ENCODE measurements at regions of chr14 and their contacts with region 1.

Region 1: DNA sequence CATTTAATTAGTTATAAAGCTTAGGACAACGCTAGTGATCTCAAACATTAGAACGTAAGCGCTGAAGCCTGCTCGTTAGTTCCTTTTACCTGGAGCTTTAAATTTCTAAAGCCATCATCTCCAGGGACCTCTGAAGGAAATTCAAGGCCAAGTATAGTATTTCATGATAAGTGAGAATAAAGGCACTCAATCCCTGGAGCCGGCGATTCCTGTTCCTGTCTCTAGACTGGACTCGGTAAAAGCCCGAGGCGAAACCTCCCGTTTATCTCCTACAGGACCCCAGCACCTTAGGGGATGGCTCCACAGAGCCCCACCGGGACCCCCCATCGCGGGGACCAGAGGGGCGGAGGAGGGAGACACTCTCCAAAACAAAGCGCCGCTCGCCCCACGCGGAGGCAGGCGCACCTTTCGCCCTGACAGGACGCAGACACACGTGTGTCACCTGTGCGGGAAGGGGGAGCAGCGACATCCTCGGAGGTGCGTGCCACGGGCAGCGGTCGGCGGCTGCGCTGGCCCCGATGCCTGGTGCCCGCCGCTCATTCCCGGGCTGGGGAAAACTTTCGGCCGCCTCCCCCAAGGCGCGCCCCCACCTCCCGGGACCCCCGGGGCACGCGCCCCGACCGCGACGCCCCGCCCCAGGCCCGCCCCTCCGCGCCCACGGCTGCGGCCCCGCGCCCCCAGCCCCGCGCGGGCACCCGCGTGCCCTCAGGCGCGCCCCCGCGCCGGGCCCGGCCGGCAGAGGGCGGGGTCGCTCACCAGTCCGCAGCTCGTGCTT is 678 bp downstream of the RPS6KA5 start:
- DNase-seq: peak; percentile 61
- H3K4me3 ChIP-seq: peak overlapping the region; percentile 79
- H3K27ac ChIP-seq: peak overlapping the region; percentile 96
- H3K4me1 ChIP-seq: no peaks in the 10 kb centered on the region
- H3K27me3 ChIP-seq: no peaks in the 10 kb centered on the region
- CTCF ChIP-seq: no peak

Region 2: GRCh38 chr14:90903101-90903500 is 156.7 kb before region 1 on chr14:
- intact Hi-C with region 1: loop called (anchors 5 kb)
- DNase-seq: peak; percentile 74
- H3K4me3 ChIP-seq: no peak overlapping the region
- H3K27ac ChIP-seq: no peak overlapping the region
- H3K4me1 ChIP-seq: no peaks in the 10 kb centered on the region
- H3K27me3 ChIP-seq: no peaks in the 10 kb centered on the region
- CTCF ChIP-seq: peak; percentile 60

Region 3: GRCh38 chr14:91140672-91141071 is 80.9 kb after region 1 on chr14:
- intact Hi-C with region 1: loop called (anchors 10 kb)
- DNase-seq: peak; percentile 50
- H3K4me3 ChIP-seq: no peak overlapping the region
- H3K27ac ChIP-seq: no peak overlapping the region
- H3K4me1 ChIP-seq: peaks cover 4% of the 10 kb centered on the region
- H3K27me3 ChIP-seq: no peaks in the 10 kb centered on the region
- CTCF ChIP-seq: peak; percentile 28

Region 4: GRCh38 chr14:91164685-91165084 is 104.9 kb after region 1 on chr14:
- intact Hi-C with region 1: no loop called
- DNase-seq: peak; percentile 72
- H3K4me3 ChIP-seq: no peak overlapping the region
- H3K27ac ChIP-seq: no peak overlapping the region
- H3K4me1 ChIP-seq: no peaks in the 10 kb centered on the region
- H3K27me3 ChIP-seq: no peaks in the 10 kb centered on the region
- CTCF ChIP-seq: no peak

Measured in colonic mucosa (tissue), 4 donors.